OCI-LY7 (cell line): ENCODE measurements at regions of chr16 and their contacts with region 1.

Region 1: DNA sequence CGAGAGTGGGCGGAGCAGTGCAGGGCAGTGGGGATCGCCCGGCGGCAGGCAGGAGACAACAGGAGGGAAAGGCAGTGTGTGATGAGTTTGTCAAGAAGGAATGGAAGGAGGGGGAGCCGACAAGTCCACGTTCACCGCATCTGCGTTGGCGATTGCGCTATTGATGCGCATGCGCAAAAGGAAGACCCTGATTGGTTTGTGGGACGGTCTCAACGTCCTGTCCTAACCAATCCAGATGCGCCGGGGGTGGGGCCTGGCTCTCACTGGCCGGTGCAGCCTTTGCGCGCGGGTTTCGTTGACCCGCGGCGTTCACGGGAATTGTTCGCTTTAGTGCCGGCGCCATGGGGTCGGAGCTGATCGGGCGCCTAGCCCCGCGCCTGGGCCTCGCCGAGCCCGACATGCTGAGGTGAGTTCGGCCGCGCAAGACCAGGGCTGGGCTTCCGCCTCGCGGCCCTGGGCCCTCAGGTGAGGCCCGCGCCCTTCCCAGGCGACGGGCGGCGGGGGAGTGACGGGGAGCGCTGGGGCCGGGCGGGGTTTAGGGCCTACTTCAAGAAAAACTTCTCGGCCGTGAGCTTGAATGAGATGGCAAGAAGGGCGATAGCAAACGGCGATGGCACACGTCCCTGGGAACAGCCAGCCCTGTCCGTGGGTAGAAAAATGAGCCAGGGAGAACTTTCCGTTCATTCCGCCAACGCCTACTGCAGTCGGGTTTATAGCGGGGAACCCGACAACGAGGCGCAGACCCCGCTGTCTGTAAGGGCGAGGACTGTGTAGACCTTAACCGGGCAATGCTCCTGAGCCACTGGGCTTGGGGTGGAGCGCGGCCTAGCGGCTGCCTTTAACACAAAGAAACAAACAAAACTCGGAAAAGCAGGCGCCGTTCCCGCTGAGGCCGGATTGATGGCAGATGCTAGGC is at the start of gene ORC6:
- DNase-seq: peak; percentile 98
- H3K4me3 ChIP-seq: peak within 1 kb of the TSS; percentile 90
- H3K27ac ChIP-seq: peak within 1 kb of the TSS; percentile 79
- H3K4me1 ChIP-seq: peaks cover 34% of the 10 kb centered on the region
- CTCF ChIP-seq: peak; percentile 85
- total RNA-seq, gene ORC6: 60.6 and 67.4 TPM in 2 replicates

Region 2: GRCh38 chr16:46673320-46674013 is 16.2 kb before region 1 on chr16:
- CTCF ChIA-PET with region 1: no interaction called
- POLR2A ChIA-PET with region 1: interaction called, 15 read pairs
- intact Hi-C with region 1: loop called (anchors 1 kb)
- DNase-seq: peak; percentile 78
- H3K4me3 ChIP-seq: no peak overlapping the region
- H3K27ac ChIP-seq: no peak overlapping the region
- H3K4me1 ChIP-seq: no peaks in the 10 kb centered on the region
- CTCF ChIP-seq: peak; percentile 99

Region 3: GRCh38 chr16:46717692-46718091 is 28.1 kb after region 1 on chr16:
- CTCF ChIA-PET with region 1: no interaction called
- POLR2A ChIA-PET with region 1: no interaction called
- intact Hi-C with region 1: no loop called
- DNase-seq: no peak
- H3K4me3 ChIP-seq: no peak overlapping the region
- H3K27ac ChIP-seq: no peak overlapping the region
- H3K4me1 ChIP-seq: peaks cover 3% of the 10 kb centered on the region
- CTCF ChIP-seq: no peak

Region 4: GRCh38 chr16:46789499-46790414 is 100.1 kb after region 1 on chr16:
- CTCF ChIA-PET with region 1: interaction called, 3 read pairs
- POLR2A ChIA-PET with region 1: interaction called, 20 read pairs
- intact Hi-C with region 1: loop called (anchors 2 kb)
- DNase-seq: peak; percentile 89
- H3K4me3 ChIP-seq: peak overlapping the region; percentile 72
- H3K27ac ChIP-seq: peak overlapping the region; percentile 81
- H3K4me1 ChIP-seq: peaks cover 43% of the 10 kb centered on the region
- CTCF ChIP-seq: no peak

Region 5: GRCh38 chr16:46883690-46884512 is 194.3 kb after region 1 on chr16 and contains the start of gene GPT2:
- CTCF ChIA-PET with region 1: no interaction called
- POLR2A ChIA-PET with region 1: interaction called, 5 read pairs
- intact Hi-C with region 1: loop called (anchors 1 kb)
- DNase-seq: peak; percentile 96
- H3K4me3 ChIP-seq: peak within 1 kb of the TSS; percentile 95
- H3K27ac ChIP-seq: peak within 1 kb of the TSS; percentile 50
- H3K4me1 ChIP-seq: peaks cover 30% of the 10 kb centered on the region
- CTCF ChIP-seq: no peak
- total RNA-seq, gene GPT2: 30.2 and 42.5 TPM in 2 replicates